Esophagus muscularis mucosa (tissue), 4 donors: ENCODE measurements at regions of chr1 and their contacts with region 1.

Region 1: DNA sequence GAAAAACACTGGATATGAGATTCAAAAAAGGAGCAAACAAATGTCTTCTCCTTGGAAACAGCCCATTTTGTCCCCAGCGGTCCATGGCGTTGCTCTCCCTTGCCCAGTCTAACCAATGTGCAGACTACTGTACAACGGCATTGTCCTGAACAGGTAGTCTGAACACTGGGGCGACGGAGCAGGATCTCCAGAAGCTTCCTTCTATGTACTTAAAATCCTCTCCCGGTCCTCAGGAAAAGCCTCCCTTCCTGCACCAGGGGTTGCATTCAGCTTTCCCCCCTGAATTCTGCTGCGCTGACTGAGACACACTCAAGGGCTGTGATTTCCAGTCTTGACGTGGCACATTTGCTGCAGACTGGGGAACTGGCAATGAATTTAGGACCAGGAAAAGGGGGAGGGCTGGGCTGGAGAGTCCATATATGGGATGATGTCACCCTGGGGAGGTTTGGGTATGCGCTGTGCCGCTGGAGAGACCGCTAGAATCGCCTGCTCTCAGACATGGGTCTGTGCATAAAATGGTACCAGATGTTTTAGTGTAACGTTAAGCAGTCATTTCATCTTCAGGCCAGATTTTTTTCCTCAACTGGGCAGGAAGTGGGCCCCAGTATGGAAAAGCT is 275.9 kb upstream of the C1orf105 start:
- DNase-seq: peak; percentile 94
- H3K4me3 ChIP-seq: peak overlapping the region; percentile 54 to 68 (median 62)
- H3K27ac ChIP-seq: peak overlapping the region; percentile 85 to 88 (median 86)
- H3K4me1 ChIP-seq: peaks cover 0 to 27% (median 23%) of the 10 kb centered on the region in 4 donors
- H3K27me3 ChIP-seq: no peaks in the 10 kb centered on the region
- CTCF ChIP-seq: no peak
- EP300 ChIP-seq: no peak
- POLR2A ChIP-seq: peak; percentile 23

Region 2: DNA sequence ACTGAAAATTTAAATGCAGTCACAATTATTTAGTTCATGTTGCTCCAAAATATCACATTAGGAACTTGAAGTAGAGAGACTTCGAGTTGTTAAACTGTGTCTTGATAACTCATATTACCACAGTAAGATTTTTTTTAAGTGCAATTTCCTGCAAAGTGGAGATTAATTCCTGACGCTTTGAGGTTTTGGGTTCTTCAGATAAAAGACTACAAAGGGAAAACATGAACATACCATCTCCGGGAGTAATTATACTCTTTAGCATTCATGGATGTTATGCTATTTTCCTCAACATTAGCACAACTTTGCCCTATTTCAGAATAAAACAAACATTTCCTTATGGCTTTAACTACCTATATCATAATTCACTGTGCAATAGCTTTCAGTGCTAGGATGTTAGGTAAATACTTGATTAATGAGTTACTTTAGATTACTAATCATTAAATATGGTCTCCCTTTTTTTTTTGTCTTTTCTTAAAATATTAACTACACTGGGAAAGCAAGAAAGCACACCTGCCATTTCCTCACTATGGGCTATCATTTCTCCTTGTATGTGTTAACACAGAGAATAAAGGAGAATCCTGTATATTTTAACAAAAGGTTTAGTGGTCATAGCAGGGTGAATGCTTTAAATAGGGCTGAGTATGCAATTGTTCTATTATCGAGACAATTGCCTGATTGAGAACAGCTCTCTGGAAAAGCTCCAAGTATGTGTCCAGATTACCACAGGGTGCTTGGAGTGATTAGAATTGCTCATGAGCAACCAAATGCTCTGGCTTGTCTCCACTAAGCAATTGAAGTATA is 23.4 kb after region 1 on chr1:
- intact Hi-C with region 1: loop called (anchors 2 kb)
- DNase-seq: no peak
- H3K4me3 ChIP-seq: no peak overlapping the region
- H3K27ac ChIP-seq: no peak overlapping the region
- H3K4me1 ChIP-seq: peaks cover 0 to 4% (median 1%) of the 10 kb centered on the region in 4 donors
- H3K27me3 ChIP-seq: no peaks in the 10 kb centered on the region
- CTCF ChIP-seq: no peak
- EP300 ChIP-seq: no peak
- POLR2A ChIP-seq: no peak

Region 3: GRCh38 chr1:172532700-172533509 is 388.4 kb after region 1 on chr1 and contains the start of gene SUCO:
- intact Hi-C with region 1: loop called (anchors 5 kb)
- DNase-seq: peak; percentile 100
- H3K4me3 ChIP-seq: peak within 1 kb of the TSS; percentile 83 to 97 (median 92)
- H3K27ac ChIP-seq: peak within 1 kb of the TSS; percentile 97 to 99 (median 98)
- H3K4me1 ChIP-seq: peaks cover 29 to 55% (median 45%) of the 10 kb centered on the region in 4 donors
- H3K27me3 ChIP-seq: no peaks in the 10 kb centered on the region
- CTCF ChIP-seq: peak in 1 of 3 experiments; percentile 8
- EP300 ChIP-seq: no peak
- POLR2A ChIP-seq: peak; percentile 85
- total RNA-seq, gene SUCO: 21.1 to 31.6 (median 22.3) TPM